Endothelial cell of umbilical vein (primary cell): ENCODE measurements at regions of chr15 and their contacts with region 1.

Region 1: DNA sequence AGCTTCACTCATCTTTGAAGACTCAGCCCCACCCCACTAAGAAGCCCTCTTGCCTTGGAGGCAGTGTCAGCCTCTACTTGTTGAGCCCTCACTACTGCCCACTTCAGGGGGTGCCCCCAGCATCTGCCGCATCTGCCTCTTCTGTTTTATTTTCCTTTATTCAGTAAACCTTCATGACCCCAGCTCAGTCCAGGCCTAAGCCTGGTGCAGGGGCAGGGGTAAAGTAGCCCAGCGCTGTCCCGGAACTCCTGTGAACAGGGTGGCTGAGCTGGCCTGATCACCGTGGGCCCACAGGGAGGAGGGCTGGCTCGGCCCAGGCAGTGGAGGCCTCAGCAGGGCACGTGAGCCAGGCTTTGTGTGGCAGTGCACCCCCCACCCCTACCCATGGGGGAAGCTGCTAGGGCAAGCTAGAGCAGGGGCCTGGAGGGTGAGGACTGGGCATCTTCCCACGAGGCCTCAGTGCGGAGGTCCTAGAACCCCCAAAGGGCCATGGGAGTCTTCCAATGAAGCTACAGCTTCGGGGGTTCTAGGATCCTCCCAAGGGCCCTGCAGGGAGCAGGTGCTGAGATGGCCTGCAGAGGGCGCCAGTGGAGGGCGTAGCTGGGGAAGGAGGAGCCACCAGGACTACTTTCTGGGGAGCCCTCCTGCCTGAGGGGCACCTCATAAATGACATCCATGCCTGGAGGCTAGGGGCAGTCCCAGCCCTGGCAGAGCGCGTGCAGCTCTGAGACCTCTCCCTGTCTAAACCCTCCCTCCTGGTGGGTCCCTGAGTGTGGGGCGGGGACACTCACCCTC is 36.0 kb downstream of the TSPAN3 start:
- DNase-seq: peak; percentile 29
- H3K4me3 ChIP-seq: no peak overlapping the region
- H3K27ac ChIP-seq: no peak overlapping the region
- H3K4me1 ChIP-seq: no peaks in the 10 kb centered on the region
- H3K27me3 ChIP-seq: no peaks in the 10 kb centered on the region
- CTCF ChIP-seq: peak; percentile 72 to 80
- POLR2A ChIP-seq: no peak

Region 2: DNA sequence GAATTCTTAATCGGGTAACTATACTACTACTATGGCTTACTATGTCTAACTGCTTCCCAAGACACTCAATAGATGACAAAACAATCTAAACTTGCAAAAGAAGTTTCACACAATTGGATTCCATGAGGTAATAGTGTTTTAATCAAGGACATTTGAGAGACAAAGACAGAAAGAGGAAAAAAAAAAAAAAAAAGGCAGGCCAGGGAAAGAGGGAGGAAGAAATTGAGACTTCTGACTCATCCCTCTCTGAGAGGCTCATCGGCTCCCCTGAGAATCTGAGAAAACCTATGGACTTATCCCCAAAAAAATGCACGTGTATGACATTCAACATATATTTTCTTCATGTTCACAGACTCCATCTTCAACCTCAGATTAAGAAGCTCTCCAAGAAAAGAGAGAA is 190.8 kb before region 1 on chr15:
- CTCF ChIA-PET with region 1: no interaction called
- POLR2A ChIA-PET with region 1: no interaction called
- dilution Hi-C with region 1: no loop called
- intact Hi-C with region 1: no loop called
- DNase-seq: no peak
- H3K4me3 ChIP-seq: no peak overlapping the region
- H3K27ac ChIP-seq: no peak overlapping the region
- H3K4me1 ChIP-seq: no peaks in the 10 kb centered on the region
- H3K27me3 ChIP-seq: no peaks in the 10 kb centered on the region
- CTCF ChIP-seq: no peak
- POLR2A ChIP-seq: no peak

Region 3: DNA sequence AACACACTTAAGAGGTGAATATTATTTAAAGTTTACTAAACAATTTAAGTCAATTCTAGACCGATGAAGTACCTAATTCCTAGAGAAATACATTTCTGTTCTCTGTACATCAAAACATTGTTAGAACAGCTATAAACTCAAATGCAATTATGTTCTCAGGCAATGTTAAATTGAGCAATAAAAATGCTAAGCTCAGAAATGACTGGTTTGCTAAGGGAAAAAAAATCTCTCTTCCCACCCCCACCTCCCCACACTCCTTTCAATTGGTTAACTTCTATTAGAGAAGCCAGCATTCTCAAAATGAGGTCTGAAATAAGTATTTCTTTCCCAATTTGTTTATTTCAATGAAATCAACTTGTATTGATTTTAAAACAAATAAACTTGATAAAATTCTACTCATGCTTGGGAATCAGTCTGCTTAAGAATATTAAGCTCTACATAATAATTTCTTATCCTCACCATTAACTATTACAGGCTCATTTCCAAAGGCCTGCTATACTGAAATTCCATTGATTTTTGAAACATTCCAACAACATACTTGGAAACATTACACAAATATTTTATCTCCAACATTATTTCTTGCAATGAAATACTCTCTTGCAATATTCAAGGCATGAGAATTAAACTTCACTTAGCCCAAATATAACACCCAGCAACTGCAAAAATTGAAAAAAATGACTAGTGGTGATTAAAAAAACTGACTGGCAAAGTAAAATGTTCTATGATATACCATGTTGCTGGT is 13.4 kb after region 1 on chr15:
- CTCF ChIA-PET with region 1: interaction called, 12 read pairs
- POLR2A ChIA-PET with region 1: no interaction called
- dilution Hi-C with region 1: no loop called
- intact Hi-C with region 1: no loop called
- DNase-seq: no peak
- H3K4me3 ChIP-seq: no peak overlapping the region
- H3K27ac ChIP-seq: no peak overlapping the region
- H3K4me1 ChIP-seq: no peaks in the 10 kb centered on the region
- H3K27me3 ChIP-seq: no peaks in the 10 kb centered on the region
- CTCF ChIP-seq: no peak
- POLR2A ChIP-seq: no peak

Region 4: GRCh38 chr15:77059786-77060361 is 25.0 kb after region 1 on chr15:
- CTCF ChIA-PET with region 1: interaction called, 18 read pairs
- POLR2A ChIA-PET with region 1: no interaction called
- dilution Hi-C with region 1: no loop called
- intact Hi-C with region 1: no loop called
- DNase-seq: peak; percentile 61
- H3K4me3 ChIP-seq: no peak overlapping the region
- H3K27ac ChIP-seq: no peak overlapping the region
- H3K4me1 ChIP-seq: peaks cover 21% of the 10 kb centered on the region
- H3K27me3 ChIP-seq: no peaks in the 10 kb centered on the region
- CTCF ChIP-seq: no peak
- POLR2A ChIP-seq: no peak

Region 5: DNA sequence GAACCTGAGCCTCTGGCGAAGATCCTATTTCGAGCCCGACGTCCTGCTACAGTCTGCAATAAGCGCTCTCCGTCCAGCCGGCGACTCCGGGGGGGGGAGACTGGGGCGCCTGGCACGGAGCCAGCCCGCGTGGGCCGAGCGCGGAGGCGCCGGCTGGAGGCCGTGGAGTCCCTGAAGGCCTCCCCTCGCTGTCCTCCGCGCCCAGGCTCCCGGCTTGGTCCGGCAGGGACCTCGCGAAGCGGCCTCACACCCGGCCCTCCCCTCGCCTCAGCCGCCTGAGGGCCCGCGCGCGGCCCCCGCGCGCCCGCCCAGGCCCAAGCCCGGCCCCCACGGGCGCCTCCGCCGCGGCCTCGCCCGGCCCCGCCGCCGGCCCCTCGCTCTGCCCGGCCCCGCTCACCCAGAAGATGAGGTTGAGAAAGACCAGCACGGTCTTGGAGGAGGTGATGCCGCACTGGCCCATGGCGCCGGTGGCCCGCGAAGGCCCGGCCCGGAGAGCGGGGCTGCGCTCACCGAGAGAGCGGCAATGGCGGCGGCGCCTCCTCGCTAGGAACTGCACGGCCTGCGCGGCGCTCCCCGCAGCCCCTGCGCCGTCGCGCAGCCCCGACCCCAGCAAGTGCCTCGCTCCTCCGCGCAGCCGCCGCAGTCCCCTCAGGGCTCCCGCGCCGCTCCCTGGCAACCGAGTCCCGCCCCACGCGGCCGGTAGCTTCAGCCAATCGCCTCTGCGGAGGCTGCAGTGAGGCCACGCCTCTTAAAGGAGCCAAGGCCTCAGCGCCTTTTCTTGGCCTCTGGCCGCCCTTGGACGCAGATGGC is 35.8 kb after region 1 on chr15 and contains the start of gene TSPAN3:
- CTCF ChIA-PET with region 1: interaction called, 5 read pairs
- POLR2A ChIA-PET with region 1: no interaction called
- dilution Hi-C with region 1: no loop called
- intact Hi-C with region 1: loop called (anchors 2 kb)
- DNase-seq: peak; percentile 96
- H3K4me3 ChIP-seq: peak within 1 kb of the TSS; percentile 53 to 98 (median 90)
- H3K27ac ChIP-seq: peak within 1 kb of the TSS; percentile 81
- H3K4me1 ChIP-seq: peaks cover 35% of the 10 kb centered on the region
- H3K27me3 ChIP-seq: peaks cover 4% of the 10 kb centered on the region in 2 experiments
- CTCF ChIP-seq: no peak
- POLR2A ChIP-seq: peak; percentile 70
- total RNA-seq, gene TSPAN3: 202 and 215 TPM in 2 replicates

Region 6: DNA sequence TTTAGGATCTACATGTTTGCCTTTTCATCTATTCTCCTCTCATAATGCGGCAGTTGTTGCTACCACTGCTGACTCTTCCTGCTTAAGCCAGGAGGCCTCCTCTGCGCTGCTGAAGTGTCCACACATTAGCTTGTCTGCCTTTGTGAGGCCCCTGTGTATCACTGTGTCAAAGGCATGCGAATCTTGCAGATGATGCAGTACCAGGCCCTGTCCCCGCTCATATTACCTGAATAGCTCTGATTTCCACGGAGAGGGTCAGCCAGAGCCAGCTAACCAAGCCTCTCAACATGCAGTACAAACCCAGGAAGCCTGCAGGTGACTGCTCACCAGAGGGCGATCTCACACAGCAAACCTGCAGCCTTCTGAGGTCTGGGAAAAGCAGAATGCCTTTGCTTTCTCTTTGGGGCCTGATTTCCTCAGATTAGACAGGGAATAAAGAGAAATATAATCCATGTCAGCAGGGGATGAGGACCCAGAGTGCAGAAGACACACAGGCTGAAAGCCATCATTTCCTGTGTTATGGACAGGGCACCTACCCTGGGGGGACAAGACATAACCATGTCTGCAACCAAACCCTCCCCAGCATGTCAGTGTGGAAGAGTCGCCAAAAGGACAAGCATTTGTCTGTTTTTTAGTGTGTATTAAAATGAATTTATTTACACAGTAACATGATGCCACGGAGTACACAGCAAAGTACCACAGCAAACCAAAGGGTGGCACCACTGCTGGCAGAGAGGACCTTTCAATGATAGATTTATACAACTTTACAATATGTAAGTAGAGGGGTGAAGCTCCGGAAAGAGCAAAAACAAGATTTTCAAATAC is 72.9 kb after region 1 on chr15:
- CTCF ChIA-PET with region 1: interaction called, 11 read pairs
- POLR2A ChIA-PET with region 1: no interaction called
- dilution Hi-C with region 1: no loop called
- intact Hi-C with region 1: no loop called
- DNase-seq: peak; percentile 53
- H3K4me3 ChIP-seq: no peak overlapping the region
- H3K27ac ChIP-seq: no peak overlapping the region
- H3K4me1 ChIP-seq: peaks cover 3% of the 10 kb centered on the region
- H3K27me3 ChIP-seq: no peaks in the 10 kb centered on the region
- CTCF ChIP-seq: peak; percentile 61 to 78
- POLR2A ChIP-seq: no peak